Left lung (tissue), 14 donors: ENCODE measurements at regions of chr4 and their contacts with region 1.

Region 1: DNA sequence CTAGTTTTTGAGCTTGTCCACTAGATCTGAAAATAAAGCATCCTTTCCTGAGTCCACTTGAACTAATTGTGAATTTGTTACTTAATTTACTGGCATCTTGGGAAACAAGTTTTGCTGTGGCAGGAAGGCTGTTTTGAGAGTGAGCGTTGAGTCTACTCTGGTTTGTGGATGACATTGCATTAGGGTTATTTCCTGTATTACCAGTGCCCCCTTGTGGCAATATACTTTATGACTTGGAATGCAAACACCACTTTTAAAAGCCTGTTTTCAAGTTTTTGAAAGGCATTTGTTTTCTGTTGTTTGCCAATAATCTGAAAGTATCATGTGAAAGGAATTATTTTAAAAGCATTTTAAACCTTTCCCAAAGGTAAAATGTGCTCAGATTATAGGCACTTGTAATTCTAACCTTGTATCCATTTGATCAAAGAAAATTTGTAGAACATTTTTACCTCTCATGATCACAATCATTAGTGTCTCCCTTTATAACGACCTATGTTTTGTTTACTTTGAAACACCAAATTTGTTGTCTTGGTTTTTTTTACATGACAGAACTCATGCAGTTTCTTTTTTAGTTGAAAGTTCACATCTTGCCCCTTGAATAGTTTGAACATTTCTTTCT is 18.0 kb upstream of the CYP2U1 start:
- DNase-seq: peak in 2 of 4 donors; percentile 60 to 71
- ATAC-seq: peak; percentile 96
- H3K4me3 ChIP-seq: no peak overlapping the region
- H3K27ac ChIP-seq: no peak overlapping the region
- H3K4me1 ChIP-seq: peaks cover 0 to 3% of the 10 kb centered on the region in 2 donors
- H3K27me3 ChIP-seq: no peaks in the 10 kb centered on the region
- CTCF ChIP-seq: peak; percentile 67 to 77

Region 2: GRCh38 chr4:107196312-107196711 is 717.1 kb before region 1 on chr4:
- intact Hi-C with region 1: no loop called
- DNase-seq: no peak
- ATAC-seq: no peak
- H3K4me3 ChIP-seq: no peak overlapping the region
- H3K27ac ChIP-seq: no peak overlapping the region
- H3K4me1 ChIP-seq: no peaks in the 10 kb centered on the region
- H3K27me3 ChIP-seq: no peaks in the 10 kb centered on the region
- CTCF ChIP-seq: no peak

Region 3: GRCh38 chr4:107757864-107758476 is 155.4 kb before region 1 on chr4:
- intact Hi-C with region 1: loop called in 1 of 2 experiments (anchors 5 kb)
- DNase-seq: peak in 1 of 4 donors; percentile 25
- ATAC-seq: peak; percentile 75
- H3K4me3 ChIP-seq: no peak overlapping the region
- H3K27ac ChIP-seq: no peak overlapping the region
- H3K4me1 ChIP-seq: peaks cover 0 to 12% of the 10 kb centered on the region in 2 donors
- H3K27me3 ChIP-seq: no peaks in the 10 kb centered on the region
- CTCF ChIP-seq: peak; percentile 14 to 38